CD8-positive, alpha-beta T cell (primary cell): ENCODE measurements at regions of chr7 and their contacts with region 1.

Region 1: DNA sequence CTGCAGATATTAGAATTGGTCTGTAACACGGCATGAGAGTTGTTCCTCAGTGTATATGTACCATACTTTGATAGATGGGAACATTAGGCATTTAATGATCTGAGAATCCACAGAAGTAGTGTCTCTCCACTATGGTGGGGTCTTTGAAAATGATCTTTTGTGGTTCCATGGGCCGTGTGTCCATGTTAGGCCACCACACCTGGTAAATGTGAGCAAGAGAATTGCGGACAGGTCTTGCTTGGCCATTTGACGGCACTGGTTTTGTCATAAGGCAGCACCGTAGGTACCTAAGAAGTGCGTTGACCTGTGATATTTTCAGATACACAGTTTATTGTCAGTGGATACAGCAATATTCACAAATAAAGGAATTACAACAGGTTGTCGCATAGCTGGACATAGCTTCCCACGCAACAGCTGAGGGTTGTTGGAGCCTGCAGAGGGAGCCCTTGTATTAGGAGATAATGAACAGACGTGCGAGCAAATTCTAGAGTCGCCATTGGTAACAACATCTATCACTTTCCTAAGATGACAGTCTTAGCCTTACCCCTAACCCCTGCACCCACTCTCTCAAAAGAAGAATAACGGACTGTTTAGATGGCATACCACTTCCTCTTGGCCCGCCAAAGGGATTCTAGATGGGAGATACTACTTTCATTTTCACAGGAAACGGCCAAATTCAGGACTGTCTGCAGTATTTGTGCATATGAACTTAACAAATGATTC is 111.4 kb downstream of the COL28A1 start:
- DNase-seq: peak; percentile 8 to 67 (median 36)
- ATAC-seq: no peak
- H3K4me3 ChIP-seq: peak overlapping the region; percentile 53 to 71
- H3K4me3 Mint-ChIP-seq: peak overlapping the region; percentile 85
- H3K27ac ChIP-seq: no peak overlapping the region
- H3K27ac Mint-ChIP-seq: peak overlapping the region; percentile 71
- H3K4me1 ChIP-seq: no peaks in the 10 kb centered on the region
- H3K4me1 Mint-ChIP-seq: peaks cover 8% of the 10 kb centered on the region
- H3K27me3 ChIP-seq: no peaks in the 10 kb centered on the region
- H3K27me3 Mint-ChIP-seq: no peaks in the 10 kb centered on the region
- CTCF ChIP-seq: peak; percentile 40

Region 2: GRCh38 chr7:6614953-6615722 is 809.2 kb before region 1 on chr7 and contains the start of gene ZNF853:
- CTCF ChIA-PET with region 1: no interaction called
- POLR2A ChIA-PET with region 1: no interaction called
- intact Hi-C with region 1: no loop called
- DNase-seq: peak in 4 of 9 experiments; percentile 38 to 60 (median 48)
- ATAC-seq: peak; percentile 64
- H3K4me3 ChIP-seq: peak within 1 kb of the TSS; percentile 62 to 63
- H3K4me3 Mint-ChIP-seq: peak within 1 kb of the TSS; percentile 81
- H3K27ac ChIP-seq: peak within 1 kb of the TSS in 1 of 2 experiments; percentile 37
- H3K27ac Mint-ChIP-seq: peak within 1 kb of the TSS; percentile 49
- H3K4me1 ChIP-seq: peaks cover 10% of the 10 kb centered on the region
- H3K4me1 Mint-ChIP-seq: peaks cover 39% of the 10 kb centered on the region
- H3K27me3 ChIP-seq: no peaks in the 10 kb centered on the region
- H3K27me3 Mint-ChIP-seq: no peaks in the 10 kb centered on the region
- CTCF ChIP-seq: no peak
- total RNA-seq, gene ZNF853: 4.2 to 4.8 TPM

Region 3: GRCh38 chr7:7542251-7542835 is 118.0 kb after region 1 on chr7:
- CTCF ChIA-PET with region 1: interaction called, 6 read pairs
- POLR2A ChIA-PET with region 1: no interaction called
- intact Hi-C with region 1: loop called in 1 of 2 experiments (anchors 1 kb)
- DNase-seq: no peak
- ATAC-seq: no peak
- H3K4me3 ChIP-seq: no peak overlapping the region
- H3K4me3 Mint-ChIP-seq: no peak overlapping the region
- H3K27ac ChIP-seq: no peak overlapping the region
- H3K27ac Mint-ChIP-seq: no peak overlapping the region
- H3K4me1 ChIP-seq: no peaks in the 10 kb centered on the region
- H3K4me1 Mint-ChIP-seq: peaks cover 2% of the 10 kb centered on the region
- H3K27me3 ChIP-seq: no peaks in the 10 kb centered on the region
- H3K27me3 Mint-ChIP-seq: peaks cover 2% of the 10 kb centered on the region
- CTCF ChIP-seq: no peak

Region 4: DNA sequence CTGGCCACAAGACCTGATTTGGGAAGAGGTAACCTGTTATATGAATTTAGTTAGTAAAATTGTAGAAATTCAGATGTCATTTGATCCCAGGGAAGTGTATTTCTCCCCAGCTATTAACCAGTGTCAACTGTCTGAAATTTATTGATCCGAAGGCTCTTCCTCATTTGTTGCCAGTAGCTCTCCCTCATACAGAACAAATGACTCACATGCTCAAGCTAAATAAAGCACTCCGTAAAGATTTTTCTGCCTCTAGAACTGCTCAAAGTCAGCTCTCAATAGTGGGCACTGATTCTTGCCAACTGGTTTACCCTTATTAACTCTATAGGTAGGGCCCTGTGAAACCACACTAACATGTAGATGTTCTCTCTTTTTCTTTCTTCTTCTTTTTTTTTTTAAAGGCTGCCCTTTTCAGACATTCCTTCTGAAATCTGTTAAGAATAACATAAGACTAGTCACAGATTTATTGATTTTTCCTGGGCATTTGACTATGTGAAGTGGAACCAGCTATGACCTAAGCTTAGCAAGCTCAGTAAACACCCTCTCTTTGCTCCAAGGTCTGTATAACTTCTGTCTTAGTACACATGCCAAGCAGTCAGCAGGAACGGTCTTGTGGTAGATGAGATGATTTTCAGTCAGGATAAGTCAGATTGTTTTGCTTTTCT is 272.3 kb after region 1 on chr7:
- CTCF ChIA-PET with region 1: no interaction called
- POLR2A ChIA-PET with region 1: no interaction called
- intact Hi-C with region 1: loop called in 1 of 2 experiments (anchors 10 kb)
- DNase-seq: no peak
- ATAC-seq: no peak
- H3K4me3 ChIP-seq: no peak overlapping the region
- H3K4me3 Mint-ChIP-seq: no peak overlapping the region
- H3K27ac ChIP-seq: no peak overlapping the region
- H3K27ac Mint-ChIP-seq: no peak overlapping the region
- H3K4me1 ChIP-seq: peaks cover 3% of the 10 kb centered on the region
- H3K4me1 Mint-ChIP-seq: peaks cover 29% of the 10 kb centered on the region
- H3K27me3 ChIP-seq: no peaks in the 10 kb centered on the region
- H3K27me3 Mint-ChIP-seq: no peaks in the 10 kb centered on the region
- CTCF ChIP-seq: no peak